Motor neuron (in vitro differentiated cells): ENCODE measurements at regions of chr2 and their contacts with region 1.

Region 1: DNA sequence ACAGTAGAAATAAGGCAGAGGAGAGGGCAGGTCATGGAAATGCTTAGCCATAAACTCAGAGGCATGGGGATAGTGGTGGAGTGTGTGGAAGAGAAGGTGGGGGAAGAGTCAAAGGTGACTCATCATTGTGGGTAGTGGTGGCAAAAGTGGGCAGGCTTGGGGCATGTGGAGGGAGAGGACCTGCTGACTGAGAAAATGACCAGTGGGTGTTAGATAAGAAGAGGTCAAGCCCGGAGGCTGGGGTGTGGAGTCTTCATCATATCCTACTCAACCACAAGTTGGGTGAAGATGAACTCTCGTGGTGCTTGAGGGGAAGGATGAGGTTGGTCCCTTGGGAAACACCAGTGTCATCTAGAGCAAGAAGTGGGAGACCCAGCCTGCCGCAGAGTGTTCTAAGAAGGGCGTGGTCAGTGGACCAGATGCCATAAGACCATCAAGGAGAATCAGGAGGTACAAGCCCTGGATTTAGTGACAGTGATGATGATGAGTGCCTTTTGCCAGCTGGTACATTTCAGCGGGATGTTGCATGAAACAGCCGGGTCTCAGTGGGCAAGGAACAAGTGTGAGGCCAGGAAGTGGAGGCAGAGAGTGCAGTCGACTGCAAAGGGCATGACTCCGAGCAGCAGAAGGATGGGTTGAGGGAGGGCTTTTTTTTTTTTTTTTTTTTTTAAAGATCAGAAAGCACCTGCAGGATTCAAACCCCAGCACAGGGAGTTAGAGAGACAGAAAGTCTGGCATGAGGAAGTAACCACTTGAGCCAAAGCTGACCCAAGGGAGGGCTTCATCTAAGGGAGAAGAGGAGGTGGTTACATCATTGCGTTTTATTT is 122.6 kb upstream of the SPRED2 start:
- ATAC-seq: peak in 1 of 8 experiments; percentile 26
- H3K4me3 ChIP-seq: no peak overlapping the region
- H3K27ac ChIP-seq: no peak overlapping the region
- H3K4me1 ChIP-seq: peaks cover 0 to 6% of the 10 kb centered on the region in 2 donors

Region 2: GRCh38 chr2:63763391-63763941 is 1791.5 kb before region 1 on chr2:
- in situ Hi-C with region 1: no loop called
- ATAC-seq: peak in 1 of 8 experiments; percentile 28
- H3K4me3 ChIP-seq: no peak overlapping the region
- H3K27ac ChIP-seq: no peak overlapping the region
- H3K4me1 ChIP-seq: peaks cover 5 to 8% of the 10 kb centered on the region in 2 donors

Region 3: GRCh38 chr2:65031341-65032018 is 523.5 kb before region 1 on chr2:
- in situ Hi-C with region 1: no loop called
- ATAC-seq: peak in 5 of 8 experiments; percentile 51 to 88 (median 63)
- H3K4me3 ChIP-seq: no peak overlapping the region
- H3K27ac ChIP-seq: no peak overlapping the region
- H3K4me1 ChIP-seq: peaks cover 0 to 11% of the 10 kb centered on the region in 2 donors

Region 4: GRCh38 chr2:65256054-65256453 is 298.9 kb before region 1 on chr2:
- in situ Hi-C with region 1: loop called in 4 of 9 experiments (anchors 10 to 25 kb)
- ATAC-seq: peak in 2 of 8 experiments; percentile 58 to 59
- H3K4me3 ChIP-seq: no peak overlapping the region
- H3K27ac ChIP-seq: no peak overlapping the region
- H3K4me1 ChIP-seq: no peaks in the 10 kb centered on the region

Region 5: GRCh38 chr2:65264821-65265670 is 289.9 kb before region 1 on chr2:
- in situ Hi-C with region 1: loop called in 3 of 9 experiments (anchors 10 to 25 kb)
- ATAC-seq: peak; percentile 22 to 87 (median 50)
- H3K4me3 ChIP-seq: no peak overlapping the region
- H3K27ac ChIP-seq: no peak overlapping the region
- H3K4me1 ChIP-seq: no peaks in the 10 kb centered on the region

Region 6: DNA sequence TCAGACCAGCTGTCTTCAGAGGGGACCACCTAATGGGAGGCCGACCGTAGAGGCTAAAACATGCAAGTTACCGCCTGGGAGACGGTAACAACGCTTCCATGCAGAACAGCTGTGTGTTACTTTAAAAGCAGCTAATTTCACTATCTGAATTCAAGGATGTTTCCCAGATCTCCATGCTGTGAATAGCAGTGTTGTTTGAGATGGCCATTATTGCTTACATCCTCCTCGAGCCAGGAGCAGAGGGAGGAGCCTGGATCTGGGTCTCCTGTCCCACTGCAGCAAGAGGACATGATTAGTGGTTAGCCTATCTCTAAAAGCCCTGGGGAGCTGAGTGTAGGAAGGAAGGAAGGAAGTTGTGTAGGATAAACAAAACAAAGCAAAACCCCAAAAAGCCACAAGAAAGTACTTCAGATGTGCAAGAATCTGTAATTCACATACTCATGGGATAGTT is 276.4 kb before region 1 on chr2:
- in situ Hi-C with region 1: loop called in 2 of 9 experiments (anchors 25 kb)
- ATAC-seq: peak in 1 of 8 experiments; percentile 17
- H3K4me3 ChIP-seq: no peak overlapping the region
- H3K27ac ChIP-seq: no peak overlapping the region
- H3K4me1 ChIP-seq: peaks cover 12 to 24% of the 10 kb centered on the region in 2 donors